ENCODE measurements at regions of chr2 and their contacts with region 1.

Region 1: GRCh38 chr2:69643602-69644505 is at the start of gene AAK1:
- DNase-seq: peak; percentile 91
- H3K4me3 Mint-ChIP-seq: peak within 1 kb of the TSS; percentile 86
- H3K27ac Mint-ChIP-seq: peak within 1 kb of the TSS; percentile 99
- H3K4me1 Mint-ChIP-seq: peaks cover 52% of the 10 kb centered on the region
- H3K27me3 Mint-ChIP-seq: no peaks in the 10 kb centered on the region
- total RNA-seq, gene AAK1: 95.2 to 99.3 TPM

Region 2: GRCh38 chr2:69559442-69560146 is 84.3 kb before region 1 on chr2:
- CTCF ChIA-PET with region 1: interaction called, 31 read pairs
- POLR2A ChIA-PET with region 1: interaction called, 6 read pairs
- intact Hi-C with region 1: loop called (anchors 2 kb)
- DNase-seq: no peak
- H3K4me3 Mint-ChIP-seq: no peak overlapping the region
- H3K27ac Mint-ChIP-seq: no peak overlapping the region
- H3K4me1 Mint-ChIP-seq: peaks cover 77% of the 10 kb centered on the region
- H3K27me3 Mint-ChIP-seq: no peaks in the 10 kb centered on the region

Region 3: GRCh38 chr2:69625078-69625795 is 18.6 kb before region 1 on chr2:
- CTCF ChIA-PET with region 1: interaction called, 11 read pairs
- POLR2A ChIA-PET with region 1: interaction called, 7 read pairs
- intact Hi-C with region 1: loop called (anchors 1 kb)
- DNase-seq: no peak
- H3K4me3 Mint-ChIP-seq: no peak overlapping the region
- H3K27ac Mint-ChIP-seq: no peak overlapping the region
- H3K4me1 Mint-ChIP-seq: peaks cover 15% of the 10 kb centered on the region
- H3K27me3 Mint-ChIP-seq: no peaks in the 10 kb centered on the region

Region 4: DNA sequence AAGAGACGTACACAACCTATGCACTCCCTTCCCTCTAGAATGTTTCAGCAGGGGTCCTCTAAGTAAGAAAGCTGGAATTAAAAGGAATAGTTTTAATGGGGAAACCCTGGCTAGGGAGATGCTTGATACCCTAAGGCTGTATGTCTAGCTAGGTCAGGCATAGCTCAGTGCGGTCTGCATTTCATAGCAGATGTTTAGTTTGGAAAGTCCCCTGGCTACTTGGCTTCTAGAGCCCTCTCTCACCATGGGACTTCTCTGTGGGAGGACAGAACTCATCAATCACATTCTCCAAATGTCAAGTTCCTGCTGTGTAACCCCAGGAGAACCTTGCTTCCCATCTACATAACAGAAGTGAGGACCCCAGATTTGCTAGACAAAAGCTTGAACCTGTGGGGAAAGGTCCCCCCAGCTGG is 74.0 kb after region 1 on chr2:
- CTCF ChIA-PET with region 1: interaction called, 6 read pairs
- POLR2A ChIA-PET with region 1: interaction called, 4 read pairs
- intact Hi-C with region 1: loop called (anchors 1 kb)
- DNase-seq: no peak
- H3K4me3 Mint-ChIP-seq: no peak overlapping the region
- H3K27ac Mint-ChIP-seq: no peak overlapping the region
- H3K4me1 Mint-ChIP-seq: peaks cover 14% of the 10 kb centered on the region
- H3K27me3 Mint-ChIP-seq: no peaks in the 10 kb centered on the region

Region 5: DNA sequence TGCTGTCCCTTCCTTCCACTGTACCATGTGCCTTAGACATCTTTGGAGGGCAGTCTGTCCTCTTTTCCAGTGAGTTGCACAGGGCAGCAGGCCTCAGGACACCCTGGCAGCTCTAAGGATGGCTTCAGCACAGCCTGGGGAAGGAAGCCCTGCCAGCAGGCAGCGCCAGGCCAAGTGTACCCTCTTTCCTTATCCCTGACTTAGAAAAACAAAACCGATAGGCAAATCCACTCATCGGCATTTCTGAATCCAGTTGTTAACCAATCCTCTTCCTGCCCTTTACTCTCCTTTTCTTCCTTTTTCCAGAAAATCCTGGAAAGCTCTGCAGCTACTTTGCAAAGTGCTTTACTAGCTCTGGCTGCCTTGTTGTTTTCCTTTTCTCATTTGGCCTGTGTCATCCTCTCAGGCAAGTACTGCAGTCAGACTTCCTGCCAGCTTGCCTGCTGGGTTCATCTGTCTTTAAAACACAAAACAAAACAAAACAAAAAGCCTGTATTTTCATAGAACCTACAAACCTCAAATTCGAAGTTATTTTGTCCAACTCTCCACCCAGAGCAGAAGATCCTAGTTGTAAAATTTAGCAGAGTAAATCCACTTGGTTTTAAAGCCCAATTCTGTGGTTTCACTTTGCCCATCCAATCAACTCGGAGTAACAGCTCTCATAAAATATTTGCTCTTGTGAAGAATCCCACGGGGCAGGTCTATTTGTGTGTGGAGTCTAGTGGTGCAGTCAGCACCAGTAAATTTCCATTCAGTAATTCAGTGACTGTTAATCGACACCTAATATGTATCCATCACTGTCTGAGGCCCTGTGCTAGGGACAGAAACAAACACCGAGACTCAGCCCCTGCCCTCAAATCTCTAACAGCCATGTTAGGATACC is 488.6 kb after region 1 on chr2:
- CTCF ChIA-PET with region 1: no interaction called
- POLR2A ChIA-PET with region 1: no interaction called
- intact Hi-C with region 1: loop called (anchors 10 kb)
- DNase-seq: peak; percentile 53
- H3K4me3 Mint-ChIP-seq: peak overlapping the region; percentile 94
- H3K27ac Mint-ChIP-seq: peak overlapping the region; percentile 100
- H3K4me1 Mint-ChIP-seq: peaks cover 75% of the 10 kb centered on the region
- H3K27me3 Mint-ChIP-seq: no peaks in the 10 kb centered on the region

Measured in activated CD4-positive, alpha-beta memory T cell treated with anti-CD3 and anti-CD28 coated beads for 36 hours (primary cell).